ENCODE measurements at regions of chr13 and their contacts with region 1.

Region 1: GRCh38 chr13:67588607-67589006 is 358.5 kb upstream of the PCDH9 start:
- DNase-seq: no peak
- ATAC-seq: no peak
- H3K4me3 ChIP-seq: no peak overlapping the region
- H3K4me3 Mint-ChIP-seq: no peak overlapping the region
- H3K27ac ChIP-seq: no peak overlapping the region
- H3K27ac Mint-ChIP-seq: no peak overlapping the region
- H3K4me1 ChIP-seq: no peaks in the 10 kb centered on the region
- H3K4me1 Mint-ChIP-seq: no peaks in the 10 kb centered on the region
- H3K27me3 ChIP-seq: no peaks in the 10 kb centered on the region
- H3K27me3 Mint-ChIP-seq: no peaks in the 10 kb centered on the region
- CTCF ChIP-seq: no peak

Region 2: GRCh38 chr13:67568205-67568604 is 20.4 kb before region 1 on chr13:
- CTCF ChIA-PET with region 1: no interaction called
- POLR2A ChIA-PET with region 1: no interaction called
- intact Hi-C with region 1: loop called in 1 of 2 experiments (anchors 1 kb)
- DNase-seq: no peak
- ATAC-seq: no peak
- H3K4me3 ChIP-seq: no peak overlapping the region
- H3K4me3 Mint-ChIP-seq: no peak overlapping the region
- H3K27ac ChIP-seq: no peak overlapping the region
- H3K27ac Mint-ChIP-seq: no peak overlapping the region
- H3K4me1 ChIP-seq: no peaks in the 10 kb centered on the region
- H3K4me1 Mint-ChIP-seq: no peaks in the 10 kb centered on the region
- H3K27me3 ChIP-seq: no peaks in the 10 kb centered on the region
- H3K27me3 Mint-ChIP-seq: no peaks in the 10 kb centered on the region
- CTCF ChIP-seq: no peak

Measured in CD8-positive, alpha-beta T cell (primary cell).